Endothelial cell of umbilical vein (primary cell): ENCODE measurements at regions of chr2 and their contacts with region 1.

Region 1: DNA sequence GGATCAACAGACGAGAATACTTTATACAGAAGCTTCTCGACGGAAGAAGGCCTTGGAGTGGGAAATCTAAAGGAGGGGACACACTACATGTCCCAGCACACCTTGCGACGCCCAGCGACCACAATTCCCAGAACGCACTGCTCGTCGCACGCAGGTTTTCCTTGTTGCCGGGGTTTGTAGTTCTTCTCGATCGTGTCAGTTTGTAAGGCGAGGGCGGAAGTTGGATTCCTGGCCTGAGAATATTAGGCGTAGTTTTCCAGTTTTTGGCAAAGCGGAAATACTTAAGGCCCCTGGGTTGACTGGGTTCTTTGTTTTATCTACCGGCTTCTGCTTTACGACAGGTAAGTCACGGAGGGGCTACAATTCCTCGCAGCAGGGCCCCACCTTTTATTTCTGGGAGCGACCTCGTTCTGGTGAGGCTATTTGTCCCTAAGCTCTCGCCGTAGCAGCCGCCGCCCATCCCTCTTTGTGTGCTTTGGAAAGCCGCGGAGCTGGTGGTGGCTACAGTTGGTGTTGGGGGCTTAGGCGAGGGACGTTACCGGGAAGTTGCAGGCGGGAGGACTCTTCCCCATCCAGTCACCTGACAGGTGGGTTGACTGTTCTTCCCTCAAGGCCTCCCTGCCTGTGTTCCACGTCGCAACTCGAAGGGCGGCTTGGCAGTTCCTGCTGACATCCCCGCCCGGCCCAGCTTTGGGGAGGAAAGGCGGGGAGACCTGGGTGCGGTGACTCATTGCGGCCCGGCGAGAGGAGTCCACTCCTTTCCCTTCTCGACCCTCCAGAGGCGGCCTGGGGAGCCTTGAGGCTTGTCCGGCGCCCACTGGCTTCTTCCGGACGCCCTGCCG is at the start of gene DYNC1I2:
- DNase-seq: peak; percentile 97
- H3K4me3 ChIP-seq: peak within 1 kb of the TSS; percentile 84 to 97 (median 96)
- H3K27ac ChIP-seq: peak within 1 kb of the TSS; percentile 75
- H3K4me1 ChIP-seq: peaks cover 5% of the 10 kb centered on the region
- H3K27me3 ChIP-seq: peaks cover 3 to 4% of the 10 kb centered on the region in 2 experiments
- CTCF ChIP-seq: no peak
- POLR2A ChIP-seq: peak; percentile 88
- total RNA-seq, gene DYNC1I2: 138 and 144 TPM in 2 replicates

Region 2: DNA sequence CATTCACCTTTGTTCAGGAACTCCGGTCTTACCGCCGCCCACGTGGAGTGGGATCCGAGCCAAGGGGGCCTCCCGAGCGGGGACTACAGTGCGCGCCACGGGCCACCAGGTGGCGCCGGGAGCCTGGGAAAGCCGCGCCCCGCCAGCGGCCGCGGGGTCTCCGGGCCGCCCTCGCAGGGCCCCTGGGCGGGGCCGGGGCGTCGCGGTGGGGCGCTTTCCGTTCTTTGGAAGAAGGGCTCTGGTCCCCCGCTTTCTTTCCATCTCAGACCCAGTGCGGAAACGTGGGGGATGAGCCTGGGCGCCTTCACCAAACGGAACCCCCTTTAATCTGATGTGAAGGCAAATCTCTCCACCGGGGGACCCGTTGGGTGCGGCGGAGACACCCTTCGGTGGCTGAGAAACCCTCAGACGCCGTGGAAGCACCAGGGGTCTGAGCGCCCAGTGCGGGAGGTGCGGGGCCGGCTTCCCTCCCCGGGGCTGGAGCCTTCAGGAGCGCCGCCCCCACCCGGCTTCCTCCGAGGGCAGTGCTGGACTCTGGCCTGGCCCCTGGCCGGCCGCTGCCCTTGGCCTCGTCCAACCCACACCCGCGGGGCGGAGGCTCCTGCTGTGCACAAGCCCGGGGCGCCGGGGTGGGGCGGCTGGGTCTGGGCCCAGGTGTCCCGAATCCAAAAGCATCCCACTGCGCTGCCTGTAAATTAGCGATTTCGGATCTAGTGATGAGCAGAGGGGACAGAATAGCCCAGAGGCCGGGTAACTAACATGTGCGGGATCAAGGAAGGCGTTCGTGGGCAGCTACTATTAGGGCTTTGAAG is 713.8 kb before region 1 on chr2:
- CTCF ChIA-PET with region 1: no interaction called
- POLR2A ChIA-PET with region 1: no interaction called
- dilution Hi-C with region 1: no loop called
- intact Hi-C with region 1: loop called (anchors 2 kb)
- DNase-seq: peak; percentile 85
- H3K4me3 ChIP-seq: peak overlapping the region; percentile 54 to 74 (median 69)
- H3K27ac ChIP-seq: peak overlapping the region; percentile 79
- H3K4me1 ChIP-seq: peaks cover 8% of the 10 kb centered on the region
- H3K27me3 ChIP-seq: no peaks in the 10 kb centered on the region
- CTCF ChIP-seq: peak; percentile 83 to 98
- POLR2A ChIP-seq: peak; percentile 67

Region 3: GRCh38 chr2:171574149-171574795 is 113.2 kb before region 1 on chr2:
- CTCF ChIA-PET with region 1: interaction called, 4 read pairs
- POLR2A ChIA-PET with region 1: no interaction called
- dilution Hi-C with region 1: no loop called
- intact Hi-C with region 1: loop called (anchors 5 kb)
- DNase-seq: peak; percentile 84
- H3K4me3 ChIP-seq: no peak overlapping the region
- H3K27ac ChIP-seq: no peak overlapping the region
- H3K4me1 ChIP-seq: no peaks in the 10 kb centered on the region
- H3K27me3 ChIP-seq: peaks cover 2 to 3% of the 10 kb centered on the region in 2 experiments
- CTCF ChIP-seq: peak; percentile 91 to 94
- POLR2A ChIP-seq: no peak

Region 4: DNA sequence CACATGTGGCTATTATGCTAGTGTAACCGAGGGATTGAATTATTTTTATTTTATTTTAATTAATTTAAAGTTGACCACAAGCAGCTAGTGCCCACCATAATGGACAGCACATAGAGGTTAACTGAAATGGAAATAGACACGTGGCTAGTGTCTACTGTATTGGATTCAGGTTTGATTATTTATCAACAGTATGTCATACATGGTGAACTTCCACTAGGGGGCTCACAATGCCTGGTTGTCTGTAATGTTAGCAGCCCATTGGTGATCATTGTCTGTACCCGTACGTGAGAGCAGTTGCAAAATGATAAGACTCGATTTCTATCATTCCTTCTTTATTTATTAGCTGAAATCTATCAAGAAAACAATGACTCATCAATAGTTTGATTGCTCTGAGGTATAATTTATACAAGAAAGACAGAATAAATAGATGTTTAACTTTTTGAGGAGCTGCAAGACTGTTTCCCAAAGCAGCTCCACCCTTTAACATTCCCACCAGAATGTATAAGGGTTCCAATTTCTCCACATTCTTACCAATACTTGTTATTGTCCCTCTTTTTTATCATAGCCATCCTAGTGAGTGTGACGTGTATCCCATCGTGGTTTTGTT is 88.7 kb before region 1 on chr2:
- CTCF ChIA-PET with region 1: interaction called, 7 read pairs
- POLR2A ChIA-PET with region 1: no interaction called
- dilution Hi-C with region 1: no loop called
- intact Hi-C with region 1: loop called (anchors 1 kb)
- DNase-seq: peak; percentile 58
- H3K4me3 ChIP-seq: no peak overlapping the region
- H3K27ac ChIP-seq: no peak overlapping the region
- H3K4me1 ChIP-seq: no peaks in the 10 kb centered on the region
- H3K27me3 ChIP-seq: peaks cover 9 to 12% of the 10 kb centered on the region in 2 experiments
- CTCF ChIP-seq: peak; percentile 67 to 70
- POLR2A ChIP-seq: no peak

Region 5: GRCh38 chr2:171652416-171652785 is 35.1 kb before region 1 on chr2:
- CTCF ChIA-PET with region 1: no interaction called
- POLR2A ChIA-PET with region 1: no interaction called
- dilution Hi-C with region 1: no loop called
- intact Hi-C with region 1: no loop called
- DNase-seq: no peak
- H3K4me3 ChIP-seq: no peak overlapping the region
- H3K27ac ChIP-seq: no peak overlapping the region
- H3K4me1 ChIP-seq: no peaks in the 10 kb centered on the region
- H3K27me3 ChIP-seq: peaks cover 9 to 28% of the 10 kb centered on the region in 2 experiments
- CTCF ChIP-seq: no peak
- POLR2A ChIP-seq: no peak

Region 6: GRCh38 chr2:171703574-171704347 is 16.3 kb after region 1 on chr2:
- CTCF ChIA-PET with region 1: interaction called, 14 read pairs
- POLR2A ChIA-PET with region 1: interaction called, 3 read pairs
- dilution Hi-C with region 1: no loop called
- intact Hi-C with region 1: no loop called
- DNase-seq: peak; percentile 59
- H3K4me3 ChIP-seq: no peak overlapping the region
- H3K27ac ChIP-seq: no peak overlapping the region
- H3K4me1 ChIP-seq: peaks cover 4% of the 10 kb centered on the region
- H3K27me3 ChIP-seq: no peaks in the 10 kb centered on the region
- CTCF ChIP-seq: peak; percentile 19 to 39
- POLR2A ChIP-seq: no peak

Region 7: GRCh38 chr2:171712051-171712450 is 24.5 kb after region 1 on chr2:
- CTCF ChIA-PET with region 1: interaction called, 9 read pairs
- POLR2A ChIA-PET with region 1: no interaction called
- dilution Hi-C with region 1: no loop called
- intact Hi-C with region 1: loop called (anchors 1 kb)
- DNase-seq: peak; percentile 91
- H3K4me3 ChIP-seq: peak overlapping the region in 1 of 3 experiments; percentile 43
- H3K27ac ChIP-seq: peak overlapping the region; percentile 97
- H3K4me1 ChIP-seq: peaks cover 39% of the 10 kb centered on the region
- H3K27me3 ChIP-seq: no peaks in the 10 kb centered on the region
- CTCF ChIP-seq: no peak
- POLR2A ChIP-seq: peak; percentile 37

Region 8: DNA sequence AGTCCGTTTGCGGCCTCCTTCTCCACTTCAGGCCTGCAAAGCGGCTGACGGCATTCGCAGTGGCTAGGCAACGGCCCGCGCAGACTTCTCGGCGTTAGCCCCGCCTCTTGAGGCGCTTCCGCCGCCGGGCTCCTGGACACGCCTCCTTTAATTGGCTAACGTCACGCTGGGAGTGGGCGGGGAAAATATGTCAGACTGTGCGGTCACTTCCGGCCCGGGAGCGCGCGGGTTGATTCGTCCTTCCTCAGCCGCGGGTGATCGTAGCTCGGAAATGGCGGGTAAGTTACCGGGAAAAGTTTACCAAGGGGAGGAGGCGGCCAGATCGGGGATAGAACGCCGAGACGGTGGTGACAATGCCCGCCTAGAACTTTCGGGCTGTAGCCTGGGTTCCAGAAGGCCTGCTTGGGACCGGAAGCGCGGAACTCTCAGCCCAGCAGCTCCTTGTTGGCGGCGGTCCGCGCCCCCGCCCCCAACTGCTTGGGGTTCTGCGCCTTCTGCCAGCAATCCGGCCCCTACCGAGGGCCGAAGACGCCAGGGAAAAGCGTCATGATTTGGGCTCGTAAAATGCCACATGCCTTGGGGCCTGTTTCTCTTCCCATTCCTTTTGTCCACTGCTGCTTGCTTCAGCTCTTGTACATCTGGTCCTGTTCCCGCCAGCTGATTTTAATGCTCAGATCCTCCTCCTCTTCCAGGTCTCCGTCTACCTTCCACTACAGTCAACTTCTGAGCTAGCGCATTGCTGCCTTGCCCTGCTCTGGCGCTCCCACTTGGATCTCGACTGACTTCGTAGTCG is 234.9 kb after region 1 on chr2 and contains the start of gene HAT1:
- CTCF ChIA-PET with region 1: no interaction called
- POLR2A ChIA-PET with region 1: no interaction called
- dilution Hi-C with region 1: no loop called
- intact Hi-C with region 1: loop called (anchors 1 kb)
- DNase-seq: peak; percentile 99
- H3K4me3 ChIP-seq: peak within 1 kb of the TSS; percentile 32 to 79 (median 57)
- H3K27ac ChIP-seq: peak within 1 kb of the TSS; percentile 77
- H3K4me1 ChIP-seq: peaks cover 13% of the 10 kb centered on the region
- H3K27me3 ChIP-seq: no peaks in the 10 kb centered on the region
- CTCF ChIP-seq: no peak
- POLR2A ChIP-seq: peak; percentile 59
- total RNA-seq, gene HAT1: 49.7 and 50.3 TPM in 2 replicates